ENCODE measurements at regions of chr20 and their contacts with region 1.

Region 1: DNA sequence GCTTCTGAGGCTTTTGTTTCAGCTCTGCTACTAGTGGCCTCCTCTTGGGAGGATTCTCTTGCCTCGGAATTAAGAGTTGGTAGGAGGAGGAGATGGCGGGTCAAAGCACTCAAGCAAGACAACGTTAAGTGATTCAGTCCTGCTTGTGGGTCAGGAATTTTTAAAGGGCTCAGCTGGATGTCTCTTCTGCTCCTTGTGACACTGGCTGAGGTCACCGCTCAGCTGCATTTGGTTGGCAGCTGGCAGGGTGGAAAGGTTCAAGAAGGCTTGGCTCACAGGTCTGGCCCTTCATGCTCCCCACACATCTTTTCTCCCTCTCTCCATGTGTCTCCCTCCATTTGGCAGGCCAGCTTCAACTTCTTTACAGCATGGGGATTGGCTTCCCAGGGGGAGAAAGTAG is 641.4 kb downstream of the KIF16B start:
- DNase-seq: no peak
- ATAC-seq: no peak
- H3K4me3 ChIP-seq: no peak overlapping the region
- H3K27ac ChIP-seq: no peak overlapping the region
- H3K4me1 ChIP-seq: no peaks in the 10 kb centered on the region
- H3K27me3 ChIP-seq: no peaks in the 10 kb centered on the region
- CTCF ChIP-seq: no peak
- POLR2A ChIP-seq: no peak
- RAD21 ChIP-seq: no peak

Region 2: DNA sequence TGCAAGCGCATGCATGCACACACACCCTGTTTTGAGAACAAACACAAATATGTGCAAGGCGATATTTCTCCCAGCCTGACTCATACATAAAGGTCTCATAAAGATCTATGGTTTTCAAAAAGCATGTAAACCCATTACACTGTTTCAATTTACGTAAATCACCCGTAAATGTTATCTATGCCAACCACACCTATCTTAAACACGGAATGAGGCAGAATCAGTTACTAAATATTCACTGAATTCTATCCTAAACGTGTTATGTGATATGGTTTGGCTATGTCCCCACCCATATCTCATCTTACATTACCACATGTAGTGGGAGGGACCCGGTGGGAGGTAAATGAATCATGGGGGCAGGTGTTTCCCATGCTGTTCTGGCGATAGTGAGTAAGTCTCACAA is 19.8 kb after region 1 on chr20:
- CTCF ChIA-PET with region 1: no interaction called
- POLR2A ChIA-PET with region 1: no interaction called
- RAD21 ChIA-PET with region 1: no interaction called
- intact Hi-C with region 1: loop called (anchors 1 kb)
- DNase-seq: no peak
- ATAC-seq: no peak
- H3K4me3 ChIP-seq: no peak overlapping the region
- H3K27ac ChIP-seq: no peak overlapping the region
- H3K4me1 ChIP-seq: no peaks in the 10 kb centered on the region
- H3K27me3 ChIP-seq: no peaks in the 10 kb centered on the region
- CTCF ChIP-seq: no peak
- POLR2A ChIP-seq: no peak
- RAD21 ChIP-seq: no peak

Measured in HCT116 (cell line).